ENCODE measurements at regions of chr2 and their contacts with region 1.

Region 1: GRCh38 chr2:191165176-191165643 is 14.4 kb upstream of the STAT4 start:
- DNase-seq: peak; percentile 62
- H3K4me3 ChIP-seq: no peak overlapping the region
- H3K27ac ChIP-seq: no peak overlapping the region
- H3K4me1 ChIP-seq: no peaks in the 10 kb centered on the region
- H3K27me3 ChIP-seq: no peaks in the 10 kb centered on the region
- CTCF ChIP-seq: peak; percentile 75

Region 2: GRCh38 chr2:190328573-190329147 is 836.5 kb before region 1 on chr2:
- CTCF ChIA-PET with region 1: interaction called, 13 read pairs
- POLR2A ChIA-PET with region 1: no interaction called
- intact Hi-C with region 1: no loop called
- DNase-seq: no peak
- H3K4me3 ChIP-seq: no peak overlapping the region
- H3K27ac ChIP-seq: no peak overlapping the region
- H3K4me1 ChIP-seq: no peaks in the 10 kb centered on the region
- H3K27me3 ChIP-seq: no peaks in the 10 kb centered on the region
- CTCF ChIP-seq: peak; percentile 39; the same call in 1 of the 2 replicates

Region 3: DNA sequence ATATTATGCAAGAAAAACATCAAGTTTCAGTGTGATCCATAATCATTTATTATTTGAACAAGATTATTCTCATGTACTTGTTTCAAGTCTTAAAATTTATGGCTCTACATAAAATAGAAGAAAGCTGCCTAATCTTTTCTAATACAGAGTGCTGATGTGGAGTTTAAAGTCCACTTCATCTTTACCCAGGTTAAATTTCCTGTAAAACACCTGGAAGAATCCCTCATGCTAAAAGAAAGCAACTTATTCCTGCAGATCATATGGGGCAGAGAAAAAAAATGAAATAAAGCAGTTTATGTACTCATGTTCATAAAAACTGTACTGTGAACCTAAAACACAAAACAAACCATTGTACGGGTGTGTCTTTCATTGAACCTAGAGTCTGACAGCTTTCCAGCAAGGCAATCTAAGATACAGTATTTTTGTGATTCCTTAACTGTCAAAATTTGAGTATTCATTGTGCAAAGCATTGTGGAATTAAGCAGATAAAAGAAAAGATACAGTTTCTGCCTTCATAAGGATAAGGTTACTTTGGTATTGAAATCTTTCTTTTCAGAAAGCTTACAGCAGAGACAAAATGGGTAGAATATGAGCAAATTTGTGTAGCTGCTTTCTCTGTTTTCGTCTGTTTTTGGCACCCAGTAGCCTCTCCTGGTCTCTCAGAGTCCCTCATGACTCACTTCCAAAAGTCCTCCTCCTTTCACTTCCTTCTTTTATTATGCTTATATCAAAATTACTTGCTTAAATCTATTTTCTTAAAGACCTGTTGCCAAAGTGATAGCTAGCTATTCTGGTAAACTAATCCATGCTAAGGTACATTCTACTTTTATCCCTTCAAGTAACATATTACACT is 311.5 kb before region 1 on chr2:
- CTCF ChIA-PET with region 1: no interaction called
- POLR2A ChIA-PET with region 1: no interaction called
- intact Hi-C with region 1: no loop called
- DNase-seq: no peak
- H3K4me3 ChIP-seq: no peak overlapping the region
- H3K27ac ChIP-seq: no peak overlapping the region
- H3K4me1 ChIP-seq: no peaks in the 10 kb centered on the region
- H3K27me3 ChIP-seq: no peaks in the 10 kb centered on the region
- CTCF ChIP-seq: no peak

Region 4: DNA sequence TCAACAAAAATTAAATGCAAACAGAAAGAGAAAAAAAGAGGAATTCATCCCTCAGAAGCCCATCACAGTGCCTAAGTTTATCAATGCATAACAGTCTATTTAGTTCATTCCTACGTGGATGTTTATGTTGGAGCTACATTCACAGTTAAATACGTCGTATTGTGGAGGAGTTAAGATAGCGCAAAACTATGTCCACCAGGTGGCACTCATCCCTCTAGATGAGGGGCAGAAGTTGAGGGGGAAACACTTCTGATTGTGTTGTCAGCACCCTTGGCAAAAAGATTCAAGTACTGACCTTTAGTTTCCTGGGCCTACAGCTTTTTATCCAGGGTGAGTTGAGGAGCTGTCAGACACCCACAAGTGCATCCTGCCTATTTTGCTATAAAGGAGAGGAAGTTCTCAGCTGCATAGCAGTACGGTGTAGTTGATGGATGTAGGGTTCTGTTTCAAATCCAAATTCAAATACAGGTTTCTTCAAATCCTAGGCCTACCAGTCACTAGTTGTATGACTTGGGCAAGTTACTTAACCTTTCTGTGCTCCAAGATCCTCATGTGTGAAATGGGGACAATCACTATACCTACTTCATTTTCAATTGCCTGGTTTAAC is 53.2 kb after region 1 on chr2:
- CTCF ChIA-PET with region 1: interaction called, 12 read pairs
- POLR2A ChIA-PET with region 1: no interaction called
- intact Hi-C with region 1: no loop called
- DNase-seq: peak; percentile 89
- H3K4me3 ChIP-seq: no peak overlapping the region
- H3K27ac ChIP-seq: no peak overlapping the region
- H3K4me1 ChIP-seq: no peaks in the 10 kb centered on the region
- H3K27me3 ChIP-seq: no peaks in the 10 kb centered on the region
- CTCF ChIP-seq: peak; percentile 82

Region 5: GRCh38 chr2:191280304-191280703 is 115.1 kb after region 1 on chr2:
- CTCF ChIA-PET with region 1: no interaction called
- POLR2A ChIA-PET with region 1: no interaction called
- intact Hi-C with region 1: no loop called
- DNase-seq: no peak
- H3K4me3 ChIP-seq: no peak overlapping the region
- H3K27ac ChIP-seq: no peak overlapping the region
- H3K4me1 ChIP-seq: no peaks in the 10 kb centered on the region
- H3K27me3 ChIP-seq: no peaks in the 10 kb centered on the region
- CTCF ChIP-seq: no peak

Region 6: DNA sequence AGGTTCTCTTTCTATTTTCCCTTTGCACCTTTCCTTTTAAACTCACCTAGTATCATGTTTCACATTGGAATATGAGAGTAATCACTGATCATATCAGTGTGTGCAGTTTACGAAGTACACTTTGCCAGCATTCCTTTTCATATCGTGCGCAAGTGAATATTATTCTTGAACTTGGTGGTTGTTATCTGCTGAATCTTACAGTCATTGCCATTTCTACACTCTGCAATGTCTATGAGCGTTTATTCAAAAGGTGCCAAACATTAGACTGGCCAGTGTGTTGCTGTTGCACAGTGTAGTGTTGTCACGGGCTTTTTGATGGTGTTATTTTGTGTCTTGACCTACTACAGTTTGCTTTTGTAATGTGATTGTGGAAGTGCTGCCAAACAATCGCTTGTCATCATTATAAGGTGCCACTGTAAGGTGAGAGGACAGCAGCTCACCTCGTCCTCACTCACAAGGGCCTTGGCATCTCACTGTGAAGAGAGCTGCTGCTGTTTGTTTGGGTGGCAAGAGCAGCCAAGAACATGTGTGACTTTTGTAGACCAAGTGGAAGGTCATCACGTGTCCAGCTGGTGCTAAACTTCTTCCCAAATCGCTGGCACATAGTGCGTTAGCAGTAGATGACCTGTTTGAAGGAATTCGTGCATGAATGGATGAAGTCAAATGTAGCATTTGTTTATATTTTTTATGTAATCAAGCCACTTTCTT is 193.3 kb after region 1 on chr2:
- CTCF ChIA-PET with region 1: no interaction called
- POLR2A ChIA-PET with region 1: no interaction called
- intact Hi-C with region 1: no loop called
- DNase-seq: no peak
- H3K4me3 ChIP-seq: no peak overlapping the region
- H3K27ac ChIP-seq: no peak overlapping the region
- H3K4me1 ChIP-seq: no peaks in the 10 kb centered on the region
- H3K27me3 ChIP-seq: no peaks in the 10 kb centered on the region
- CTCF ChIP-seq: no peak

Region 7: DNA sequence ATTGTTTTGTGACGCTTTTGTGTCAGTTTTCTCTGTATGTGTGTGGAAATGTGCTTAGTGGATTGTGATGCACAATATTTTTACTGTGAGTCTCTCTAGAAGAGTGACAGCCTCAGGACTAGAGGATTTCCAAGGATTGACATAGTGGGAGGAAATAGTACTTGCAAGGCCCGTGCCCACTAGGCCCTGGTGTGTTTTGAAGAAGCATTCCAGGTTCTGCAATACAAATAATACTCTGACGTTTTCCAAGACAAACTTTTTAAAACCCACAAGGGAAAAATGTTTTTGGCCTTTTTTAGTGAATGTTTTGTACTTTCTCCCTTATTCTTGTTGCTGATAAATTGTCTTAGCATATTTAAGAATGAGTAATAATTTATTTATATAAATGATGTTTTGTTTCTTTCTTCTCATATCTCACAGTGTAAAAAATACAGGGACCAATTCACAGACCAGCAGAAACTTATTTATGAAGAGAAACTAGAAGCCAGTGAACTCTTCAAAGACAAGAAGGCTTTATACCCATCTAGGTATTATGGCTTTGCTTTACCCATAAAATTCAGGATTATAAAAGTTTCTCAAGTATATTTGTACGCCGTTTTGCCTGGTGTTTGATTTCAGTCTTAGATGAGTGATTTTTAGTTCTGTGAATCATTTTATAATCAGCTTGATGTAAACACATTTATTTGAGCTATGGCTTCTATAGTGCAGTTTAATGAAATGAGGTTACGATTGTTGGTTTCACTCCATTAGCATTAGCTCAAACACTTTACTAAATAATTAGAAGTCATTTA is 245.6 kb after region 1 on chr2:
- CTCF ChIA-PET with region 1: no interaction called
- POLR2A ChIA-PET with region 1: no interaction called
- intact Hi-C with region 1: no loop called
- DNase-seq: no peak
- H3K4me3 ChIP-seq: no peak overlapping the region
- H3K27ac ChIP-seq: no peak overlapping the region
- H3K4me1 ChIP-seq: no peaks in the 10 kb centered on the region
- H3K27me3 ChIP-seq: no peaks in the 10 kb centered on the region
- CTCF ChIP-seq: no peak

Region 8: GRCh38 chr2:191501561-191502168 is 336.5 kb after region 1 on chr2:
- CTCF ChIA-PET with region 1: no interaction called
- POLR2A ChIA-PET with region 1: no interaction called
- intact Hi-C with region 1: loop called (anchors 1 kb)
- DNase-seq: peak; percentile 58
- H3K4me3 ChIP-seq: no peak overlapping the region
- H3K27ac ChIP-seq: no peak overlapping the region
- H3K4me1 ChIP-seq: peaks cover 11% of the 10 kb centered on the region
- H3K27me3 ChIP-seq: no peaks in the 10 kb centered on the region
- CTCF ChIP-seq: peak; percentile 66

Region 9: GRCh38 chr2:191521608-191522208 is 356.5 kb after region 1 on chr2:
- CTCF ChIA-PET with region 1: interaction called, 6 read pairs
- POLR2A ChIA-PET with region 1: no interaction called
- intact Hi-C with region 1: loop called (anchors 1 kb)
- DNase-seq: peak; percentile 45
- H3K4me3 ChIP-seq: no peak overlapping the region
- H3K27ac ChIP-seq: no peak overlapping the region
- H3K4me1 ChIP-seq: no peaks in the 10 kb centered on the region
- H3K27me3 ChIP-seq: no peaks in the 10 kb centered on the region
- CTCF ChIP-seq: peak; percentile 74

Measured in A673 (cell line).